Psoas muscle (tissue), 8 donors: ENCODE measurements at regions of chr6 and their contacts with region 1.

Region 1: GRCh38 chr6:148736774-148737412 is 9.9 kb upstream of the UST start:
- DNase-seq: no peak
- ATAC-seq: peak in 1 of 4 donors; percentile 39
- H3K4me3 ChIP-seq: no peak overlapping the region
- H3K27ac ChIP-seq: no peak overlapping the region
- H3K4me1 ChIP-seq: no peaks in the 10 kb centered on the region
- H3K27me3 ChIP-seq: no peaks in the 10 kb centered on the region
- CTCF ChIP-seq: no peak

Region 2: GRCh38 chr6:148629592-148630465 is 107.1 kb before region 1 on chr6:
- intact Hi-C with region 1: loop called in 1 of 2 experiments (anchors 10 kb)
- DNase-seq: no peak
- ATAC-seq: no peak
- H3K4me3 ChIP-seq: no peak overlapping the region
- H3K27ac ChIP-seq: no peak overlapping the region
- H3K4me1 ChIP-seq: peaks cover 12% of the 10 kb centered on the region
- H3K27me3 ChIP-seq: no peaks in the 10 kb centered on the region
- CTCF ChIP-seq: no peak